Activated naive CD4-positive, alpha-beta T cell treated with anti-CD3 and anti-CD28 coated beads for 36 hours (primary cell): ENCODE measurements at regions of chr15 and their contacts with region 1.

Region 1: GRCh38 chr15:66851226-66852071 is 149.4 kb downstream of the SMAD6 start:
- DNase-seq: peak; percentile 84
- H3K4me3 Mint-ChIP-seq: no peak overlapping the region
- H3K27ac Mint-ChIP-seq: no peak overlapping the region
- H3K4me1 Mint-ChIP-seq: peaks cover 8% of the 10 kb centered on the region
- H3K27me3 Mint-ChIP-seq: peaks cover 2% of the 10 kb centered on the region

Region 2: DNA sequence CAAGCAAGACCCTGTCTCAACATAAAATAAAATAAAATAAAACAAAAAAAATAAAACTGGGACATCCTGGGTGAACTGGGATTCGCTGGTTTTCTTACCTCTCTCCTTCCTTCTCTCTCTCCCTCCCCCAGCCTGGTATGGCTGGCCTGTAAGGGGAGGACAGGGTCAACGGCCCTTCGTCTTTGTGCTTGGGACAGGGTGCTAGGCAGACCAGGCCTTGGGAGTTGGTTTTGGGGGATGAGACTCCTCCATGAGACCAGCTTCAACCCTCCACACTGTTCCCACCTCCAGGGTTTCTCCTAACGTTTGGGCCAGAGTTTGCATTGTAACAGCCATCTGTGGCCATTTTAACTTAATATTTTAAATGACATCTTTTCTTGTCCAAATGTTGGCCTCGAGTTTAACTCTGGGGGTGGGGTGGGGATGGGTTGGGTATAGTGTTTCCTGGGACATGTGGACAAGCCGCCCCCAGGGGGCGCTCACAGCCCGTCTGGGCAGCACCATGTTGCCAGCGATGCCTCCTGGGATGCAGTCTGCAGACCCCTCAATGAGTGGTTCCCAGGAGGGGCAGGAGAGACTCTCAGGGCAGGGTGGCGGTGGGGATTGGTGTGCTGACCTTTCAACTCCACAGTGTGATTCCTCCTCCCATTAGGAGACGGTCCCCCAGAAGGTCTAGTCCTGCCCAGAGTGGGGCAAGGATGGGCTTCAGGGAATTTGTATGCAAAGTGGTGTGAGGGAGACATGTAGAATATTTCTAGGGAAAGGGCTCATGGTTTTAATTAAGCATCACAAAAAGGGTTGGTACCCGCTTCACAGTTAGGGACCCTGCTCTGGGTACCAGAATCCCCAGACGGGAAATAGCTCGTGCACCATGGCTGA is 247.9 kb before region 1 on chr15:
- CTCF ChIA-PET with region 1: interaction called, 31 read pairs
- intact Hi-C with region 1: loop called (anchors 1 kb)
- DNase-seq: peak; percentile 72
- H3K4me3 Mint-ChIP-seq: no peak overlapping the region
- H3K27ac Mint-ChIP-seq: no peak overlapping the region
- H3K4me1 Mint-ChIP-seq: peaks cover under 1% of the 10 kb centered on the region
- H3K27me3 Mint-ChIP-seq: no peaks in the 10 kb centered on the region

Region 3: DNA sequence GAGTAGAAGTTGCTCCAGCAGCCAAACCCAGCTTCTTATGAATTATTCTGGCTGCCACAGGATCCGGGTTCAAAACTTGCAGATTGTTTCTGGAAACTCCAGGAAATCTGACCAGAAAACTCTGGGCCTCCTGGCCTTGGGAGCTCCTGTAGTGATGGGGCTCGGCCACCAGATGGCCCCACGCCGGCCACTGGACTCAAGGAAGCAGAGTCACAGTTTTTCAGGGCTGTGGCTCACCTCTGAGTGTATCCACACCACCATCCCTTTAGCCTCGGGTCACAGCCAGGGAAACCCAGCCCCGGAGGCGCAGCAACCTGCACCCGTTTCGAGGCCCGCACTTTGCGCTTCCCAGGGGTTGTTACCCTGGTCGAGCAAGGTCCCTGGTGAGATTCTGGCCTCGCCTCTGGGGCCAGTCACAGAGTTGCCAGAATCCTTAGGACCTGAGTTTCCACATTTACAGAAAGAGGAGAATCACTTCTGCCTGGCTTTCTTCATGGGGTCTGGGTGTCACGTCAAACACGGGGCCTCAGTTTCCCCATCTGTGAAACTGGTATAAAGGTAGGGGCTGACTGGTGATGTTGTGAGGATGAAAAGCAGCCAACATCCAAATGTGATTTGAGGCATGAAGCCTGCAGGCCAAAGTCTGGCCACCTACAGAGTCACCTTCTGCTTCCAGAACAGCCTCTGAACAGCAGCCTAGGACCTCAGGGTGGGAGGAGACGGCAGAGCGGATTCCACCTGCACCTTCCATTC is 232.1 kb before region 1 on chr15:
- CTCF ChIA-PET with region 1: interaction called, 24 read pairs
- intact Hi-C with region 1: loop called (anchors 5 kb)
- DNase-seq: peak; percentile 61
- H3K4me3 Mint-ChIP-seq: no peak overlapping the region
- H3K27ac Mint-ChIP-seq: no peak overlapping the region
- H3K4me1 Mint-ChIP-seq: peaks cover 4% of the 10 kb centered on the region
- H3K27me3 Mint-ChIP-seq: peaks cover 20% of the 10 kb centered on the region

Region 4: GRCh38 chr15:66635817-66636216 is 215.6 kb before region 1 on chr15:
- CTCF ChIA-PET with region 1: interaction called, 10 read pairs
- intact Hi-C with region 1: no loop called
- DNase-seq: no peak
- H3K4me3 Mint-ChIP-seq: no peak overlapping the region
- H3K27ac Mint-ChIP-seq: no peak overlapping the region
- H3K4me1 Mint-ChIP-seq: peaks cover 9% of the 10 kb centered on the region
- H3K27me3 Mint-ChIP-seq: no peaks in the 10 kb centered on the region

Region 5: GRCh38 chr15:66700802-66701421 is 150.5 kb before region 1 on chr15:
- CTCF ChIA-PET with region 1: interaction called, 7 read pairs
- intact Hi-C with region 1: loop called (anchors 1 kb)
- DNase-seq: peak; percentile 85
- H3K4me3 Mint-ChIP-seq: peak overlapping the region; percentile 85
- H3K27ac Mint-ChIP-seq: peak overlapping the region; percentile 42
- H3K4me1 Mint-ChIP-seq: peaks cover 11% of the 10 kb centered on the region
- H3K27me3 Mint-ChIP-seq: peaks cover 13% of the 10 kb centered on the region

Region 6: DNA sequence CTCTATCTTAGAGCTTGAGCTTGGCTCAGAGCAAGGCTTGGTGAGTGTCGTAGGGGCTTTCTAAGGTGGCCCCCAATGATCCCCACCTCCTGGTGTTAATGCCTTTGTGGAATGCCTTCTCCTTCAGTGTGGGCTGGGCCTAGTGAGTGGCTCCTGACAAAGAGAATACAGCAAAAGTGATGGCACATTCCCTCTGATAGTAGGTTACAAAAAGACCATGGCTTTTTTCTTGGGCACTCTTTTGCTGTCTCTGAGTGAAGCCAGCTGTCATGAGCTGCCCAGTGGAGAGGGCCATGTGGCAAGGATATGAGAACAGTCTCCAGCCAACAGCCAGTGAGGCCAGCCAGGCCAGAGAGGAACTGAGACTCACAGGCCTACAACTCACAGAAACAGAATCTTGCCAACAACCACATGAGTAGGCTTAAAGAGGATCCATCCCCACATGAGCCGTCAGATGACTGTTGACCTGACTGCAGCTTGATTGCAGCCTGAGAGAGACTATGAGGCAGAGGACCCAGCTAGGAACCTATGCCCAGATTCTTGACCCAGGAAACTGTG is 16.0 kb before region 1 on chr15:
- CTCF ChIA-PET with region 1: interaction called, 11 read pairs
- intact Hi-C with region 1: no loop called
- DNase-seq: no peak
- H3K4me3 Mint-ChIP-seq: no peak overlapping the region
- H3K27ac Mint-ChIP-seq: no peak overlapping the region
- H3K4me1 Mint-ChIP-seq: no peaks in the 10 kb centered on the region
- H3K27me3 Mint-ChIP-seq: no peaks in the 10 kb centered on the region

Region 7: GRCh38 chr15:66862878-66863335 is 11.5 kb after region 1 on chr15:
- CTCF ChIA-PET with region 1: interaction called, 16 read pairs
- intact Hi-C with region 1: no loop called
- DNase-seq: peak; percentile 85
- H3K4me3 Mint-ChIP-seq: no peak overlapping the region
- H3K27ac Mint-ChIP-seq: no peak overlapping the region
- H3K4me1 Mint-ChIP-seq: no peaks in the 10 kb centered on the region
- H3K27me3 Mint-ChIP-seq: peaks cover 12% of the 10 kb centered on the region